PC-9 (cell line): ENCODE measurements at regions of chrX and their contacts with region 1.

Region 1: DNA sequence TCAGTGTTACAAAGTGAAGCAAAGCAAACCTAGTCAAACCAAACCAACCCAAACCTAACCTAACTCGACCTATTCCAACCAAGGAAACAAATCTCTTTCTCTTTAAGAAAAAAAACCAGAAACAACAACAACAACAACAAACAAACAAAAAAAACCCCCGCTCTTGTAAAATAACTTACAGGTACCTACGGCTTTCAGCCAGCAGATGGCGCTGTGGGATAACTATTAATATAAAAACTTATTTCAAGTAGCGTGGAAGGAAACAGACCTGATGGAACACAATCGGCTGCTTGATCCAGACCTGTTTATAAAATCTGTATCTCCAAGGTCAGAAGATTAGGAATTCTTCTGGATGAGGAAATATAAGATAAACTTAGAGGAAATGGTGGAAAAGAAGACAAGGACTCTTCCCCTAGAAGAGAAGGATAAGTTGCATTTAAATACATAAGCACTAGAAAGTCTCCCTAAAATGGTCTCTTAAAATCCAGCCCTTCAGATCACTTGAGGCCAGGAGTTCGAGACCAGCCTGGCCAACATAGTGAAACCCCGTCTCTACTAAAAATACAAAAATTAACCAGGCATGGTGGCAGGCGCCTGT is 34.4 kb upstream of the CDKL5 start:
- DNase-seq: peak; percentile 35 to 38
- H3K4me3 ChIP-seq: no peak overlapping the region
- H3K27ac ChIP-seq: no peak overlapping the region
- H3K4me1 ChIP-seq: no peaks in the 10 kb centered on the region
- H3K27me3 ChIP-seq: no peaks in the 10 kb centered on the region
- CTCF ChIP-seq: peak; percentile 85

Region 2: GRCh38 chrX:16853537-16853936 is 1537.5 kb before region 1 on chrX:
- CTCF ChIA-PET with region 1: interaction called, 11 read pairs
- POLR2A ChIA-PET with region 1: no interaction called
- intact Hi-C with region 1: no loop called
- DNase-seq: no peak
- H3K4me3 ChIP-seq: no peak overlapping the region
- H3K27ac ChIP-seq: no peak overlapping the region
- H3K4me1 ChIP-seq: no peaks in the 10 kb centered on the region
- H3K27me3 ChIP-seq: no peaks in the 10 kb centered on the region
- CTCF ChIP-seq: no peak

Region 3: DNA sequence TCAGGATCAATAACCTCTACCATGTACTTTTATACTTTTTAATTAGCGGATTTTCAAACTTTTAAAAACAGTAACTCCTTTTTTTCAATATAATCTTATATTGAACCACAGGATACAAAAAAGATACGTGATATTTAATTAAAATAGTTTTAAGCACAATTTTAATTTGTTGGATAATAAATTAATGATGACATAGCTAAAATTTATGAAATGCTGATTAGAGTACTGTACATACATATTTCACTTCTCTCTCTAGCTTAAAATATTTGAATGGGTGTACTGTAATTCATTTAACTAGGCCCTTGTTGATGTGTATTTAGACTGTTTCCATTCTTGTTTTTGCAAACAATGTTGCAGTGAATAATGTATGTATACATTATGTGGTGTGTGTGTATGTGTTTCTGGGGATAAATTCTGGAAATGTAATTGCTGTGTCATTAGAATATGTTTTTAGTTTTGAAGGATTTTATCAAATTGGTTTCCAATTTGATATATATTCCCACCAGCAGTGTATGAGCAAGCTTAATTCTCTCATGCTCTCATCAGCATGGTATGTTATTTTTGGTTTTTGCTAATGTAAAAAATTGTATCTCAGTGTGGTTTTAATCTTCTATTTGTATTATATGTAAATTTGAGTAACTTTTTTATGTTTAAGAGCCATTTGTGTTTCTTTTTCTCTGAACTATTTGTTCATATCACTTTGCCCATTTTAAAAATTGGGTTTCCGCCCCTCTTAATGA is 100.7 kb after region 1 on chrX:
- CTCF ChIA-PET with region 1: no interaction called
- POLR2A ChIA-PET with region 1: no interaction called
- intact Hi-C with region 1: no loop called
- DNase-seq: no peak
- H3K4me3 ChIP-seq: no peak overlapping the region
- H3K27ac ChIP-seq: no peak overlapping the region
- H3K4me1 ChIP-seq: no peaks in the 10 kb centered on the region
- H3K27me3 ChIP-seq: no peaks in the 10 kb centered on the region
- CTCF ChIP-seq: no peak

Region 4: GRCh38 chrX:18899796-18900447 is 508.9 kb after region 1 on chrX:
- CTCF ChIA-PET with region 1: no interaction called
- POLR2A ChIA-PET with region 1: no interaction called
- intact Hi-C with region 1: loop called (anchors 1 kb)
- DNase-seq: peak in 1 of 2 experiments; percentile 15
- H3K4me3 ChIP-seq: no peak overlapping the region
- H3K27ac ChIP-seq: no peak overlapping the region
- H3K4me1 ChIP-seq: no peaks in the 10 kb centered on the region
- H3K27me3 ChIP-seq: no peaks in the 10 kb centered on the region
- CTCF ChIP-seq: peak; percentile 45; the same call in 1 of the 2 replicates

Region 5: GRCh38 chrX:19225924-19226323 is 834.9 kb after region 1 on chrX:
- CTCF ChIA-PET with region 1: no interaction called
- POLR2A ChIA-PET with region 1: no interaction called
- intact Hi-C with region 1: loop called (anchors 5 kb)
- DNase-seq: peak in 1 of 2 experiments; percentile 1
- H3K4me3 ChIP-seq: no peak overlapping the region
- H3K27ac ChIP-seq: no peak overlapping the region
- H3K4me1 ChIP-seq: no peaks in the 10 kb centered on the region
- H3K27me3 ChIP-seq: peaks cover 5% of the 10 kb centered on the region; the same call in 1 of the 2 replicates
- CTCF ChIP-seq: no peak; the same call in 1 of the 2 replicates

Region 6: DNA sequence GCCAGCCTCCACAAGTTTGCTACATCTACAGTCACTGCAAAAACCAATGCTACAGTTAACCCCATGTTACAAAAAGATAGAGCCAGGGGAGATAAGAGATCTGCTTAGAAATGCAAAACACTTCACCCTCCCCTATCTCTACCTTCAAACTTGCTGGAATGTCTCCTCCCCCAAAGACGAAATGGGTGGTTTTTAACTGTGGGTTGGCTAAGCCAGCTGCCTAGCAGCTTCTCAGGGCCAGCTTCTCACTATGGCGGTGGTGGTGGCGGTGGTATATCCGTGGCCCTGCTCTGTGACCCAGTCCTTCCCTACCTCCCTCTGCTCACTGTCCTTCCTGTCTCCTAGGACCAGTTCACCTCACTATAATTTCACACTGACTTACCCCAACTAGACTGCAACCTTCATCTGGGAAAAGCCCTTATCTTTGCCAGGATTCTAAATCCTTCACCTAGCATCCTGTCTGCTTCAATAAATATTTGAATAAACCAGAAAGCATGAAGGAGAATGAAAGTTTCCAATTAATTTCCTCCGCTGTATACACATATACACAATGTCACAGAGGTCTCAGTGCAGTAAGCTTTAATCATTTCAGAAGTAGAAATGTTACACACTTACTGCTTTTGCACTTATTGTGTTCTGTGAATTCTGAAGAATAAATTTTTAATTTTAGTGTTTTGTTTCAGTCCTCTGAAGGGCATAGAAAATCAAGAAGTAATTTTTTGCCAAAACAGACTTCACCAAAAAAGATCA is 1450.0 kb after region 1 on chrX:
- CTCF ChIA-PET with region 1: interaction called, 12 read pairs
- POLR2A ChIA-PET with region 1: no interaction called
- intact Hi-C with region 1: no loop called
- DNase-seq: no peak
- H3K4me3 ChIP-seq: no peak overlapping the region
- H3K27ac ChIP-seq: no peak overlapping the region
- H3K4me1 ChIP-seq: peaks cover 22% of the 10 kb centered on the region
- H3K27me3 ChIP-seq: no peaks in the 10 kb centered on the region
- CTCF ChIP-seq: no peak